GM10248 (cell line): ENCODE measurements at regions of chr6 and their contacts with region 1.

Region 1: DNA sequence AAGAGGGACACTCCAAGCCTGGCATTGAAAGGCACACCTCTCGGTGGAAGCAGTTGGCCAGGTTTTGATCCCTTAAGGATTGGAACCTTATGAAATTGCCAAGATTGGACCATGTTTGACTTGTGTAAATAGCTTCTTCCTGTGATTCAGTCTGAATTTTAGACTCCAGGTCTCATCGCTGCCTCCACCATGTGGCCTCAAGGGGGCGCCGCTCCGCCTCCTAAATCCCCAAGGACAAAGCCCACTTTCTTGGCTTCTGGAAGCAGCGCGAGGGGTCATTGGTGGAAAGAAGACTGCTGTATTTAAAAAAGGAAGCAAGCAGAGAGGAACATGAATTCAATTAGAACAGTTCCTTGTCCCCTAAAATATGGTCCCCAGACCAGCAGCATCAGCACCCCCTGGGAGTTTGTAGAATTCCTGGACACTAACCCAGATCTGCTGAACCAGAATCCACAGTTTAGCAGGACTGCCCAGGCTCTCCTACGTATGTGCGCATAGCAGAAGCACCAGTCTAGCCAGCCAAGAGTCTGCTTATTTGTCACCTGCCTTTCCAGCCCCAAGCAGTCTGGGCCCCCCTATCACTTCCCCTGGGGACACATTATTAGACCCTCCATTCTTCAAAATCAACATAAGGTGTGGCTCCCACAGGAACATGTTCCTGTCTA is 108.5 kb downstream of the LY86 start:
- DNase-seq: peak; percentile 62
- CTCF ChIP-seq: peak; percentile 76

Region 2: DNA sequence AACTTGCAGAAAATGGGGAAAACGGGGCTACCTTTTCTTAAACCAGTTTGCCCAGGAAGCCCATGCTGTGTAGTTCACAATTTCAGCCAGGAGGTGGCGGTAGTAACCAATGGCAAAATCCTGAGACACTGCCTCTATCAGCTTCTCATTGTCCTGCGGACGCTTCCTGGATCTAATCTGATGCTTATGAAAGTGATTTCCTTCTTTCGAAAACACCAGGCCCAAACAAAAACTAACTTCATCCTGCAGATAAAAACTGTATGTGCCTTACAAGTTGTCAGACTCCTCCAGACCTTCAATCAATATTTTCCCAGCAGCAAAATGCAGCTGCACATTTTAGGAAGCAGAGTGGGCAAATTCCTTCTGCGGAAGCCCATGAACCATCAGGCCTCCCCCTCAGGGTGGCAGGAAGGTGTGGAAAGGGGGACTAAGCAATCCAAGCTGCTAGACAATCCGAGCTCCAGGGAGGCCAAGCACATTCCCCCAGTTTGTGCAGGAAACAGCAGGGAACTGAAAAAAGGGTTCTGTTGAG is 20.0 kb before region 1 on chr6:
- CTCF ChIA-PET with region 1: interaction called, 16 read pairs
- POLR2A ChIA-PET with region 1: no interaction called
- DNase-seq: peak; percentile 73
- CTCF ChIP-seq: peak; percentile 90

Region 3: GRCh38 chr6:6686748-6687601 is 10.0 kb before region 1 on chr6:
- CTCF ChIA-PET with region 1: interaction called, 13 read pairs
- POLR2A ChIA-PET with region 1: interaction called, 3 read pairs
- DNase-seq: no peak
- CTCF ChIP-seq: no peak

Region 4: GRCh38 chr6:7033202-7033601 is 336.2 kb after region 1 on chr6:
- CTCF ChIA-PET with region 1: no interaction called
- POLR2A ChIA-PET with region 1: no interaction called
- DNase-seq: no peak
- CTCF ChIP-seq: no peak

Region 5: DNA sequence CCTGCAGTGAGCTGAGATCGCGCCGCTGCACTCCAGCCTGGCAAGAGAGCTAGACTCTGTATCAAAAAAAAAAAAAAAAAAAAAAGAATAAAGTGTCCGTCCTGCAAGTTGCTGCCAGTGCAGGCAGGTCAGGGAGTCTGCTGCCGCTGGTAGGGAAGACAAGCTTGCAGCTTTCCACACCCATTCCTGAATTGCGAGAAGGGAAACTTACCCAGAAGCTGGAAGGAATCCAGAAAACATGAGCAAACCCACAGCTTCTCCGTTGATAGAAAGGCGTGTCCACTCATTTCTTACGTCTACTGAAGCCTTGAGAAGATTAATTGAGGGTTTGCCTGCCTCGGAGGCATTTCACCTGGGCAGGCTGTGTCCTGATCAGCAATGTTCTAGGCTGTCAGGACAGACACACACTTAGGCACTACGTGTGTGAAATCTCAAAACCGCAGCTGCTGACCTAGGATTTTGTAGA is 782.8 kb after region 1 on chr6:
- CTCF ChIA-PET with region 1: no interaction called
- POLR2A ChIA-PET with region 1: no interaction called
- DNase-seq: no peak
- CTCF ChIP-seq: no peak